ENCODE measurements at regions of chr2 and their contacts with region 1.

Region 1: GRCh38 chr2:226185616-226186211 is 613.9 kb downstream of the IRS1 start:
- DNase-seq: peak; percentile 92
- ATAC-seq: peak; percentile 83
- H3K4me3 ChIP-seq: peak overlapping the region; percentile 57
- H3K27ac ChIP-seq: peak overlapping the region; percentile 95
- H3K4me1 ChIP-seq: peaks cover 46% of the 10 kb centered on the region
- H3K27me3 ChIP-seq: no peaks in the 10 kb centered on the region
- CTCF ChIP-seq: no peak

Region 2: DNA sequence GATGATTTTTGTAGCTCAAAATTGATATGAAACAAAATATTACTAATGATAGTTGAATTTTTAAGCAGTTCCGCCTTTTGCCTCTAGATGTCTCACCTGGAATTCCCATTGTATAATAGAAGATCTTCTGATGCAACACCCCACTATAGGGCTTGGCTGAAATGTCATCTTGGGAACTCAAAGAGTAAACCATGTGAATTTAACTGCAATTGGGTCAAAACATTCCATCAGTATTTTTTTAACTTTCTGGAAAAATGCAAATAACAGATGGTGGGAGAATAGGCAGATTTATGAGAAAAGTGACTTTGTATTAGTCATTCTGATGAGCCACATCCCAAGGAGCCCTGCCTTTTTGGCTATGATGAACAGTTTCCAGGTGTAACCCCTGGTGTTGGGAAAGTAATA is 296.3 kb before region 1 on chr2:
- CTCF ChIA-PET with region 1: no interaction called
- POLR2A ChIA-PET with region 1: no interaction called
- intact Hi-C with region 1: loop called (anchors 10 kb)
- DNase-seq: peak; percentile 75
- ATAC-seq: peak; percentile 94
- H3K4me3 ChIP-seq: no peak overlapping the region
- H3K27ac ChIP-seq: peak overlapping the region; percentile 66
- H3K4me1 ChIP-seq: peaks cover 23% of the 10 kb centered on the region
- H3K27me3 ChIP-seq: no peaks in the 10 kb centered on the region
- CTCF ChIP-seq: peak; percentile 84

Region 3: DNA sequence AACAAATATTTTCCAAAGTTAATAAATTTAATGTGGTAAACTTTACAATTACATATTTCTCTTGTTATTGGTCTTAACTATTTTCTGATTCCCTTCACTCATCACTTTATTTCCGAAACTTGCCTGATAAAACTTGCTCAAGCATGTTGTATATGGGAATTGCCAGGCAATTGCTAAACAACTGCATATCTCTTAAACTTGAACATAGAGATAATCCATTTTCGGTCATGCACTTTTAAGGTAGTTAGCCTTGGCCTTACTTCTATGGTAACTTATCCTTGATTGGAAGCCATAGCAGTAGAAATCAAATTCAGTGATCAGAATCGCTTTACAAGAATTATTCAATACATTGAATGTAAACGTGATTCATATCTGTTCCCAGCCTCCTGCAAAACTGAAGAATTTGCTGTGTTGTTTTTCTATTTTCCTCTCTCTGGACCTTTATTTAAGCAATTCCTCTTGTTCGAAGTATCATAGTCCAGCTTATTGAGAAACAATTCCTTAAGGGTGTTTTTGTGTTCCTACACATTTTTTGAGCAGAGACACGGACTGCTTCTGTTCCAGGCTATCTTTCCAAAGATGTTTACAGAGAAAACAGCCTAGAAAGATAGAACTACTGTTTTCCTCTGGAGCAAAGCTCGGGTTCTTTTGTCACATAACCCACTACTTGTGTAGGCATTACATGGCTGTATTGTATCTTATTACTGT is 60.4 kb before region 1 on chr2:
- CTCF ChIA-PET with region 1: no interaction called
- POLR2A ChIA-PET with region 1: no interaction called
- intact Hi-C with region 1: no loop called
- DNase-seq: no peak
- ATAC-seq: no peak
- H3K4me3 ChIP-seq: no peak overlapping the region
- H3K27ac ChIP-seq: no peak overlapping the region
- H3K4me1 ChIP-seq: peaks cover 1% of the 10 kb centered on the region
- H3K27me3 ChIP-seq: no peaks in the 10 kb centered on the region
- CTCF ChIP-seq: no peak

Region 4: DNA sequence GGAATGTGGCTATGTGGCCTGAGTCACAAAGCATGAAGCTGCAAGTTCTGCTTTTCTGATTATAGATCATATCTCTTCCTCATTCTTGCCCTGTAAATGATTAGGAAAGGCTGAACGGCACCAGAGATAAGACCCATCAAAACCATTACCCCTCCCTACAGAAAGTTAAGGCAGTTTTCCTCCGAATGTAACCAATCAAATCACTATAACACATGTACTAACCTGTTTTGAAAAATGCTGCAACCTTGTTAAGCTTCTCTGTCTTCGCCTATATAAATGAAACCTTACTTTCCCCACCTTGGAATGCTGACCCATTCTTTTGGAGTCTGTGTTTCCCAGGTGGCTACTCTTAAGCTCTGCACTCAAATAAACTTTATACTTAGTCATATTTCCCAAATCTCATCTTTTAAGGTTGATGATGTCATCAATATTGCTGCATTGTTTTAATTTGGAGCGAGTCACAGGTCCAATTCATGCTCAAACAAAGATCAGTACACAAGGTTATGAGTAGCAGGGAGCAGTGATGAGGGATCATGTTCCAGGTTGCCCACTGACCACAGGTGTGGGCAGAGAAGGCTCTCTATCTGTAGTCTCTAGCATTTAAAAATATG is 48.4 kb before region 1 on chr2:
- CTCF ChIA-PET with region 1: no interaction called
- POLR2A ChIA-PET with region 1: no interaction called
- intact Hi-C with region 1: no loop called
- DNase-seq: peak; percentile 67
- ATAC-seq: peak; percentile 87
- H3K4me3 ChIP-seq: no peak overlapping the region
- H3K27ac ChIP-seq: peak overlapping the region; percentile 60
- H3K4me1 ChIP-seq: peaks cover 13% of the 10 kb centered on the region
- H3K27me3 ChIP-seq: no peaks in the 10 kb centered on the region
- CTCF ChIP-seq: no peak

Region 5: DNA sequence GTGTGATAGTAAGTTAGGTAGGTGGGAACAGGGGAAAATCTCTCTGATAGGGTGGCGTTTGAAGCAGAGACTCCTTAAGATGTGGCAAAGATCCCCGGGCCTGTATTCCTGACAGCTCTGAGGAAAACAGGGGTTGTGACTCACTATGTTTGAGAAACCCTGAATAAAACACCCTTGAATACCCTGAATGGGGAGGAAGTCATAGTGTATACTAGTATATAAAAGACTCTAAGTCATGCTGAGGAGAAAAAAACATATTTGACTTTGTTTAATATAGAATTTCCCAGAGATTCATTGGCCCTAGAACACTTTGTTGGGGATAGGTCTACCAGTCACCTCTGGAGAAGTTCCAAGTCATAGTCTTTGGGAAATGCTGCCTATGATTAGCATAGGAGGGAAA is 23.0 kb after region 1 on chr2:
- CTCF ChIA-PET with region 1: no interaction called
- POLR2A ChIA-PET with region 1: interaction called, 3 read pairs
- intact Hi-C with region 1: loop called (anchors 2 kb)
- DNase-seq: peak; percentile 73
- ATAC-seq: peak; percentile 98
- H3K4me3 ChIP-seq: no peak overlapping the region
- H3K27ac ChIP-seq: peak overlapping the region; percentile 65
- H3K4me1 ChIP-seq: peaks cover 45% of the 10 kb centered on the region
- H3K27me3 ChIP-seq: no peaks in the 10 kb centered on the region
- CTCF ChIP-seq: no peak

Region 6: GRCh38 chr2:226256237-226256636 is 70.5 kb after region 1 on chr2:
- CTCF ChIA-PET with region 1: no interaction called
- POLR2A ChIA-PET with region 1: no interaction called
- intact Hi-C with region 1: loop called (anchors 1 kb)
- DNase-seq: peak; percentile 76
- ATAC-seq: peak; percentile 95
- H3K4me3 ChIP-seq: no peak overlapping the region
- H3K27ac ChIP-seq: peak overlapping the region; percentile 64
- H3K4me1 ChIP-seq: peaks cover 11% of the 10 kb centered on the region
- H3K27me3 ChIP-seq: no peaks in the 10 kb centered on the region
- CTCF ChIP-seq: no peak

Region 7: GRCh38 chr2:226673314-226673723 is 487.6 kb after region 1 on chr2:
- CTCF ChIA-PET with region 1: no interaction called
- POLR2A ChIA-PET with region 1: no interaction called
- intact Hi-C with region 1: no loop called
- DNase-seq: peak; percentile 83
- ATAC-seq: peak; percentile 73
- H3K4me3 ChIP-seq: no peak overlapping the region
- H3K27ac ChIP-seq: peak overlapping the region; percentile 23
- H3K4me1 ChIP-seq: peaks cover 25% of the 10 kb centered on the region
- H3K27me3 ChIP-seq: no peaks in the 10 kb centered on the region
- CTCF ChIP-seq: no peak

Measured in PC-3 (cell line).